ENCODE measurements at regions of chr1 and their contacts with region 1.

Region 1: GRCh38 chr1:208093754-208094719 is 150.1 kb downstream of the PLXNA2 start:
- H3K4me3 ChIP-seq: no peak overlapping the region
- H3K27ac ChIP-seq: no peak overlapping the region
- H3K4me1 ChIP-seq: no peaks in the 10 kb centered on the region
- CTCF ChIP-seq: peak; percentile 45; the same call in 1 of the 2 replicates

Region 2: DNA sequence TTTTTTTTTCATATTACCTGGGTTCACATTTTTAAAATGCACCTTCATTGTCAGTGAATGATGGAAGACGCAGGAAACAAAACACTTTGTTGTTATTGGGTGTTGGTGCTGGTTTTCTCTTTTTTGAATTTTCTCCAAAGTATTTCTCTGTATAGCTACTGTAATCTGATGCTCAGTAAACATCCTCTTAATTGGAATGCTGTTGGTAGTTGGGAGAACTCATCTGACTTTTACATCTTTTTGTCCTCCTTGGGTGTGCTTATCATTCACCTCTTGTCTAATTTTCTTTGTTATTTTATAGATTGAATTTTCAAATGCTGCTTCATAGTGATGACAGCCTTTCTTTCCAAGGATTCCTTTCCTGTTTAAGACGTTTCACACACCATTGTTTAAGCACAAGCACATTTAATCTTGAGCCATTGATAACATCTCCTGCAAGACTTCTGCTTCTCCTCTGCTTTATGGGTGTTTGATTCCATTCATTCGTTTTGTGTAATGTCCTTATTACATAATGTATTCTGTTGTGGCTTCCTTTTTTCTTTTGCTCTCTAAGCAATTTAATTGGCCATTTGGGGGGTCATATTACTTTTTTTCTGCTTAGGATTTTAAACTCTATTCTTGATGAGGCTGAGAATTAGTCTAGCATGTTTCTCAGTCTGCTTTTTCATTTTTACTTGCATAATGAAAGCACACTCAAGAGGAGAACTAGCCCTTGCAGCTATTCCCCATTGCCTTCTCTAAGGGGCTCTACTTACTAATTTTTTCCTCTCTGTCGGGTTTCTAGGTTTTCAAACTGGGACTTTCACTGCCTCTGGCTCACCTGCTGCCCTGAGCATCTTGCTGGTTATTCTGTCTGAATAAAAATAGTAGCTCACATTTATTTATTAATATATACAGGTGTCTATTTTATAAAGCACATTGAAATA is 141.2 kb before region 1 on chr1:
- CTCF ChIA-PET with region 1: no interaction called
- POLR2A ChIA-PET with region 1: no interaction called
- H3K4me3 ChIP-seq: no peak overlapping the region
- H3K27ac ChIP-seq: no peak overlapping the region
- H3K4me1 ChIP-seq: peaks cover 3% of the 10 kb centered on the region; the same call in 1 of the 2 replicates
- CTCF ChIP-seq: no peak

Region 3: GRCh38 chr1:208034135-208034534 is 59.9 kb before region 1 on chr1:
- CTCF ChIA-PET with region 1: interaction called, 10 read pairs
- POLR2A ChIA-PET with region 1: no interaction called
- H3K4me3 ChIP-seq: no peak overlapping the region
- H3K27ac ChIP-seq: no peak overlapping the region
- H3K4me1 ChIP-seq: no peaks in the 10 kb centered on the region
- CTCF ChIP-seq: no peak

Region 4: DNA sequence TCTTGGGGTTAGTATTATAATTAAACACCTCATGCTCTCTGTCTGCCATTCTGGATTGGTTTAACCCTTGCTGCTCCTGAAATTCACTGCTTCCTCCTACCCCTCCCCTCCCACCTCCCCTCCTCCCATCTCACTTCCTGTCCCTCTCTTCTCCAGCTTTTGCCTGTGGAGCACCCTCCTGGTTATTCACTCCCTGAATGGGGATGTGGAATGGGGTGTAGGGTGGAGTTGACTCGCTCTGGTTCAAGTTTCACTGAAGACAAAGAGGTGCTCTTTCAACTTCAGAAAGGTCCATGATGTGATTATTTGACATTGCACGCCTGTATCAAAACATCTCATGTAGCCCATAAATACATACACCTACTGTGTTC is 10.3 kb before region 1 on chr1:
- CTCF ChIA-PET with region 1: interaction called, 10 read pairs
- POLR2A ChIA-PET with region 1: no interaction called
- H3K4me3 ChIP-seq: no peak overlapping the region
- H3K27ac ChIP-seq: no peak overlapping the region
- H3K4me1 ChIP-seq: no peaks in the 10 kb centered on the region
- CTCF ChIP-seq: no peak

Measured in HEK293 (cell line).